ENCODE measurements at regions of chr5 and their contacts with region 1.

Region 1: GRCh38 chr5:161946911-161947310 is 99.0 kb downstream of the GABRA1 start:
- DNase-seq: no peak
- H3K4me3 ChIP-seq: no peak overlapping the region
- H3K27ac ChIP-seq: no peak overlapping the region
- H3K4me1 ChIP-seq: no peaks in the 10 kb centered on the region
- H3K27me3 ChIP-seq: no peaks in the 10 kb centered on the region
- CTCF ChIP-seq: no peak

Region 2: DNA sequence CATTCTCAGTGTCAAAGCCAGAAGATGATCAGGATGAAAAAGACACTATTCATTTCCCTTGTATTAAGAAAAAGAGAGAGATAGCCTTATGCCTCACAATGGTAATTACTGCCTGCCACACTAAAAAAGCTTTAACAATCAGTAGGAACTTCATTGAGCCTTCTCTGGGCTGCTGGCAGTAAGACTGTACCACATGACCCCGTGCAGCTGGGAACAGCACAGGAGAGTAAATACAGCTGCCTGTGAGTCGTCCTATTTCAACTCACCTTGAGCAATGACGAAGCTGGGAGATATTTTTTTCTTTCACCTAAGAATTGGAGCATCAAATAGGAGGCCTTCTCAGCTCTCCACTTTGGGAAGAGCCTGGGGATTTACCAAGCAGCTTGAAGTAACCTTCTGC is 716.7 kb before region 1 on chr5:
- intact Hi-C with region 1: loop called (anchors 10 kb)
- DNase-seq: peak in 3 of 5 donors; percentile 11 to 21 (median 19)
- H3K4me3 ChIP-seq: no peak overlapping the region
- H3K27ac ChIP-seq: no peak overlapping the region
- H3K4me1 ChIP-seq: no peaks in the 10 kb centered on the region
- H3K27me3 ChIP-seq: no peaks in the 10 kb centered on the region
- CTCF ChIP-seq: no peak

Measured in kidney (tissue), 22 donors.